SK-N-SH (cell line): ENCODE measurements at regions of chr4 and their contacts with region 1.

Region 1: DNA sequence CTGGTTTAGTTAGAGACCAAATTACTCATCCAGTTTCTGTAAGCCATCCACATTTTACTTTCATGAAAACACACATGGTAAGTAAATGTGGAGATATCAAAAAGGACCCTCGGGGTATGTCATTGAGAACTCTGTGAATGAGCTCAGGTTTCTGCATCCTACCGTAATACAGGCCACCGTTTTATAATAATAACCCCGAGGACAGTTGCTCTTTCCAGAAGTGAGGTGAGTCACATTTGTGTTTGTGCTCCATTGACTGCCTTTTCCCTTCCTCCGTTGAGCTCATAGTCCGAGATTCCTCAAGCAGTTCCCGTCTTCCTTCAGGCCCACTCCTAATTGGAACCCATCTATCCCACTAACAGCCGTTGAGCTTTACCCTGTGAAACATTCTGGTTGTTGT is 95.3 kb downstream of the GRID2 start:
- DNase-seq: no peak
- H3K4me3 ChIP-seq: no peak overlapping the region
- H3K27ac ChIP-seq: no peak overlapping the region
- H3K4me1 ChIP-seq: no peaks in the 10 kb centered on the region
- H3K27me3 ChIP-seq: no peaks in the 10 kb centered on the region
- CTCF ChIP-seq: no peak
- EP300 ChIP-seq: no peak
- RAD21 ChIP-seq: no peak

Region 2: GRCh38 chr4:92120810-92121498 is 278.1 kb before region 1 on chr4:
- CTCF ChIA-PET with region 1: no interaction called
- POLR2A ChIA-PET with region 1: no interaction called
- DNase-seq: no peak
- H3K4me3 ChIP-seq: no peak overlapping the region
- H3K27ac ChIP-seq: no peak overlapping the region
- H3K4me1 ChIP-seq: no peaks in the 10 kb centered on the region; a peak in 1 of 4 replicates
- H3K27me3 ChIP-seq: no peaks in the 10 kb centered on the region
- CTCF ChIP-seq: no peak
- EP300 ChIP-seq: no peak
- RAD21 ChIP-seq: no peak

Region 3: GRCh38 chr4:92387459-92388069 is 11.5 kb before region 1 on chr4:
- CTCF ChIA-PET with region 1: interaction called, 12 read pairs
- POLR2A ChIA-PET with region 1: no interaction called
- DNase-seq: peak; percentile 17
- H3K4me3 ChIP-seq: no peak overlapping the region; a peak in 1 of 4 replicates
- H3K27ac ChIP-seq: no peak overlapping the region
- H3K4me1 ChIP-seq: no peaks in the 10 kb centered on the region
- H3K27me3 ChIP-seq: no peaks in the 10 kb centered on the region
- CTCF ChIP-seq: peak; percentile 76
- EP300 ChIP-seq: no peak
- RAD21 ChIP-seq: peak; percentile 64